Activated B cell treated with CpG ODN at 0.5 μM for 24 hours (primary cell): ENCODE measurements at regions of chr5 and their contacts with region 1.

Region 1: DNA sequence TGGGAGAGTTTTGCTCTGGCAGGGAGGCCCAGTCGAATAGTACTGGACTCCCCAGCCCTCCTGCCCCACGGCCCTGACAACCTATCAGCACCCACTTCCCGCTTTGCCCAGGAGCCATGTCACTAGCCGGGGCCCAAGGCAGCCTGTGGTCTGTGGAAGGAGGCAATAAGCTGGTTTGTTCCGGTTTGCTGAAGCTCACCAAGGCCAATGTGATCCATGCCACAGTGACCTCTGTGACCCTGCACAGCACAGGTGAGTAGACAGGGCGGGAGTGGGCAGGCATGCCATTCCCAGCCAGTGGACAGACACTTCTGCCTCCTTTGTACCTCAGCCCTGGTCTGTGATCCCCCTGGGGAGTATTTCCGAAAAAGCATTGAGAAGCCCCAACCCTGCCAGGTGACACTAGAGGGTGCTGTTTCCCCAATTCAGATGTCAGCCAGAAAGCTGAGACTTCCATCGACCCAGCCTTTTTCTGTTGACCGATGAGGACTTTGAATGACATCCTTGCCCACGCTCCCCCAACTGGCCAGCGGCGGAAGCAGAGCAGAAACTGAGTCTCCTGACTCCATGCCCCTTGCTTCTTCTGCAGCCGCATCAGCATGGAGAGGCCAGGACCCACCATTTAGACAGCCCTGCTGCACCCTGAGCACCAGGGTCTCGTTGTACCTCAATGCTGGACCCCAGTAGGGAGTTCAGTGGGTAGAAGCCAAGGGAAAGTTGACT is 9.6 kb downstream of the PCYOX1L start:
- DNase-seq: peak; percentile 29
- ATAC-seq: peak; percentile 85
- H3K4me3 Mint-ChIP-seq: no peak overlapping the region
- H3K27ac Mint-ChIP-seq: no peak overlapping the region
- H3K4me1 Mint-ChIP-seq: peaks cover 5% of the 10 kb centered on the region
- H3K27me3 Mint-ChIP-seq: no peaks in the 10 kb centered on the region
- CTCF ChIP-seq: peak; percentile 40

Region 2: GRCh38 chr5:149317281-149318048 is 49.9 kb before region 1 on chr5:
- CTCF ChIA-PET with region 1: interaction called, 29 read pairs
- POLR2A ChIA-PET with region 1: no interaction called
- intact Hi-C with region 1: loop called (anchors 1 kb)
- DNase-seq: no peak
- ATAC-seq: no peak
- H3K4me3 Mint-ChIP-seq: no peak overlapping the region
- H3K27ac Mint-ChIP-seq: no peak overlapping the region
- H3K4me1 Mint-ChIP-seq: no peaks in the 10 kb centered on the region
- H3K27me3 Mint-ChIP-seq: no peaks in the 10 kb centered on the region
- CTCF ChIP-seq: no peak